Activated naive CD4-positive, alpha-beta T cell treated with anti-CD3 and anti-CD28 coated beads for 36 hours (primary cell): ENCODE measurements at regions of chr2 and their contacts with region 1.

Region 1: DNA sequence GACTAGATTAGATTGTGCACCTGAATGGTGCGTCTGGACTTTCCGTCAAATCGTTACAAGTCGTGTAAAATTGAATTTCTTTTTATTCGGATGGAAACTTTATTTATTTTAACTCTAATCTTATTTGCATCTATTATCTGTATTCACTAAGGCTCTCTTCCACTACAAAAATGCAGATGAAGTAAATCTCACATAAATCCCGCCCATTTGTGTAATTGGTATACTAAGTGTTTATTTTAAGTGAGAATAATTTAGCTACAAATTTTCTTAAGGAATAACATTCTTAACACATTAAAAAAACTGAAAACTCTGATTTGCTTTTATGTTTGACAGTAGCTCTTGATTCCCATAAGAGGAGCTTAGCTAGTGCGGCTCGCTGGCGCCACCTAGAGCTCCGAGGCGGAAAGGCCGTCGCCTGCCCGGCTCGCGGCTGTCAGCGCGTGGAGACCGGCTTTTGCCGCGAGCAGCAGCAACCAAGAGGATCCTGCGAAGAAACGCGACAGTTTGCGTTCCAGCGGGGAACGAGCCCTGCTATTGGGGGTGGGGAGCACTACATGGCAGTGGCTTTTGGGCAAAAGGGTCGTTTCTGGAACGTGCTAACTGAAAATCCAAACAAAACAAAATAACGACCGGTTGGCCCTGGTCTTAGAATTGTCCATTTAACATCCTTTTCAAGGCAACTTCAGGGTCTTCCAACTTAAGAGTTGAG is 6.7 kb downstream of the SP9 start:
- DNase-seq: peak; percentile 93
- H3K4me3 Mint-ChIP-seq: peak overlapping the region; percentile 62
- H3K27ac Mint-ChIP-seq: peak overlapping the region; percentile 51
- H3K4me1 Mint-ChIP-seq: peaks cover 37% of the 10 kb centered on the region
- H3K27me3 Mint-ChIP-seq: peaks cover 62% of the 10 kb centered on the region

Region 2: DNA sequence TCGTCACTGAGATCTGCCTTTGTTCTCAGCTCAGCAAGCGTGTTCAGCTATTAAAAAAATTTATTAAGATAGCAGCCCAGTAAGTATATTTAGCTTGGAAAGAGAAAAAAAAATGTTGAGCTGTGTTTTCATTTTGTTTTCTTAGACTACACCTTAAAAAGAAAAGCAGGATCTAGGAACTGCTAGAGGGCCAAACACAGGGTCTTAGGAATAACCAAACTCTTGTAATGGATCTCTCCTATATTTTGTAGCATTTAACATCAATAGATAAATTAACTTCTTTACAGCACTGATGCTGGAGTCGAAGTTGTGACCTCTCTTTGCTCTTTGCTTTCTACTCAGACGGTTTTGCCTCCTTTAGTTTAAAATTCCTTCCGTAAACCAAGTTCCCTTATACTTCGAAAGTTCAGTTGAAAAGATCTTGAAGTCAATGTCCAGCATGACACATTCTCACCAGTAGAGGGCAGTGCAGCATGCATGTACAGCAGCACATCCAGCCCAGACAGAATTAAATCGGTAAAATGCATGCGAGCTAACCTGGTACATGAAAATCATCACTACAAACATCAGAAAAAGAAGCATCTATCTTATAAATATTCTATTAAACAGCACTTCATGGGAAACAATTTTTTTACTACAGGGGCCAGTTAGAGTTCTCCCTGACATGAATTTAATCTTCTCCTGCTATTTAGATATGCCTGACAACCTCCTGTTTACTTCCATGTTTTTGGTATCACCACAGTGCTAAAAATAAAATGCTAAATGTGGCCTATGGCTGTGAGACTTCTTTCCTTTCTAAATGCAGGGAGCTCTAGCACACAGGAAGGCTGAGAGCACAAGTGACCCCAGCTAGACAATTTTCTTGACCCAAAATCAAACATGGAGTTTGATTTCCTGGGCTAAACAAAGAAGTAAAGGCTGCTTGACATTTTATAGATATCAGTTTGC is 1314.0 kb before region 1 on chr2:
- CTCF ChIA-PET with region 1: interaction called, 5 read pairs
- intact Hi-C with region 1: loop called (anchors 1 kb)
- DNase-seq: peak; percentile 90
- H3K4me3 Mint-ChIP-seq: no peak overlapping the region
- H3K27ac Mint-ChIP-seq: no peak overlapping the region
- H3K4me1 Mint-ChIP-seq: no peaks in the 10 kb centered on the region
- H3K27me3 Mint-ChIP-seq: peaks cover 3% of the 10 kb centered on the region

Region 3: DNA sequence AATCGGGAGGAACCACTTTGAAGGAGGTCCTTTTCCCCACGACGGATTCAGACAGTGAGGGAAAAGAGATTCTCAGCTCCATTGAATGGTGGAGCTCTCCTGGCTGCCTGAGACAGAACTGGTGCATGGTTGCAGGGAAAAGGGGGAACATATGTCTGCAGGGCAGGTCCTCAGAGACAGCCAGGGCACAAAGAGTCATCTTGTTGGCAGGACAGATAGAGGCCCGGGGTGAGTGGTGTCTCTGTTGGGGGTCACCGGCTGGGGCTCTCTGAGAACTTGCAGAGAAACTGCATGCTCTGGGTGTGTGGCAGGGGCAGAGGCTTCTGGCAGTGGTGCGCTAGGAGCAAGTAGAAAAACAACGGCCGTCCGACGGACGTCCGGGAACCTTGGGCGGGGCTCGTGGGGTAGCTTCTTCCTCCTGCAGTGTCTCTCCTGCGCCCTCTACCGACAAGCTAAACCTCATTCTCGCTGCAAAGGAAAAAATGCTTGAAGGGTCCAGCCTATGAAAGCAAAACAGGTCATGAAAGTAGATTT is 892.4 kb before region 1 on chr2:
- CTCF ChIA-PET with region 1: no interaction called
- intact Hi-C with region 1: loop called (anchors 1 kb)
- DNase-seq: peak; percentile 82
- H3K4me3 Mint-ChIP-seq: peak overlapping the region; percentile 64
- H3K27ac Mint-ChIP-seq: peak overlapping the region; percentile 39
- H3K4me1 Mint-ChIP-seq: peaks cover 11% of the 10 kb centered on the region
- H3K27me3 Mint-ChIP-seq: peaks cover 4% of the 10 kb centered on the region

Region 4: GRCh38 chr2:173884025-173884802 is 457.2 kb before region 1 on chr2:
- CTCF ChIA-PET with region 1: interaction called, 4 read pairs
- intact Hi-C with region 1: loop called (anchors 2 kb)
- DNase-seq: peak; percentile 38
- H3K4me3 Mint-ChIP-seq: no peak overlapping the region
- H3K27ac Mint-ChIP-seq: no peak overlapping the region
- H3K4me1 Mint-ChIP-seq: no peaks in the 10 kb centered on the region
- H3K27me3 Mint-ChIP-seq: peaks cover 5% of the 10 kb centered on the region

Region 5: DNA sequence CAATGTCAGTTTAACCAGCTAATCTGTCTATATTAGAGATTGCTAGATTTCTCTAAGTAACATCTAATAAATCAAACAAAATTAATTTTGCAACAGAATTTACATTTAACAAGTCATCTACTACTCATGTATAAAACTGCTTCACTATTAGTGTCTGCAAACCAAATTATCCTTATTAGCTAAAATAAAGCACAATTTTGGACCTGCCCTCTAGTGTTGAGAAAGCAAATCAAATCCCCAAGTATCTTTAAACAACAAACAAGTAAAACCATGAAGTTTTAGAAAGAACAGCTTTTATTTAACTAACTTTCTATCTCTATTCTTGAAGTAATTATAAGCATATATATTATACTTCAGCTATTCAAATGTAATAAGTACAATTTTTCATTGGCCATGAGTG is 263.2 kb before region 1 on chr2:
- CTCF ChIA-PET with region 1: interaction called, 3 read pairs
- intact Hi-C with region 1: loop called (anchors 10 kb)
- DNase-seq: no peak
- H3K4me3 Mint-ChIP-seq: no peak overlapping the region
- H3K27ac Mint-ChIP-seq: no peak overlapping the region
- H3K4me1 Mint-ChIP-seq: no peaks in the 10 kb centered on the region
- H3K27me3 Mint-ChIP-seq: no peaks in the 10 kb centered on the region

Region 6: DNA sequence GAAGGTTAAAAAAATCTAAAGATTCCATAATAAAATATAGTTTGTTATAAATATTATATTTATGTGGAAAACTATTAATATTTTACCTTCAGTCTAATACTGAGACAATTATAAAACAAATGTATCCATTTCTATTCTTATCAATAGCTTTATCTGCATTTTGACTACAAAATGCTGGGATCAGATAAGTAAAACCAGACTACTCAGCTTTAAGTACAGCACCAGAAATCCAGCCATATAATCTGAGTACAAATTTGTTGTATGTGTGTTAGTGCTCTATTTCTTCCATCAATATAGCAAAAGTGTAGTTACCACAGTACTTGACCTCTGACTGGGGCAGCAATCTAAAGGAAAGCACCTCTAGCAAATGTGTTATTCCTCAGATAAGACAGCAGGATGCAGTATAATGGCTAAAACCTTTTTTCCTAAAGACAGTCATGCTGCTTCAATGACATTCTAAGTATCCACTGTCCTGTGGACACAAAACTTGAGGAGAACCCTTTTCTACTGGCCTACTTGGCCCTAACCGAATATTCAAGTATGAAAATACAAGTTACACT is 161.2 kb before region 1 on chr2:
- CTCF ChIA-PET with region 1: no interaction called
- intact Hi-C with region 1: no loop called
- DNase-seq: no peak
- H3K4me3 Mint-ChIP-seq: no peak overlapping the region
- H3K27ac Mint-ChIP-seq: no peak overlapping the region
- H3K4me1 Mint-ChIP-seq: no peaks in the 10 kb centered on the region
- H3K27me3 Mint-ChIP-seq: no peaks in the 10 kb centered on the region

Region 7: GRCh38 chr2:174326161-174327020 is 15.0 kb before region 1 on chr2:
- CTCF ChIA-PET with region 1: interaction called, 22 read pairs
- intact Hi-C with region 1: loop called (anchors 1 kb)
- DNase-seq: peak; percentile 39
- H3K4me3 Mint-ChIP-seq: peak overlapping the region; percentile 70
- H3K27ac Mint-ChIP-seq: no peak overlapping the region
- H3K4me1 Mint-ChIP-seq: peaks cover 25% of the 10 kb centered on the region
- H3K27me3 Mint-ChIP-seq: peaks cover 74% of the 10 kb centered on the region

Region 8: DNA sequence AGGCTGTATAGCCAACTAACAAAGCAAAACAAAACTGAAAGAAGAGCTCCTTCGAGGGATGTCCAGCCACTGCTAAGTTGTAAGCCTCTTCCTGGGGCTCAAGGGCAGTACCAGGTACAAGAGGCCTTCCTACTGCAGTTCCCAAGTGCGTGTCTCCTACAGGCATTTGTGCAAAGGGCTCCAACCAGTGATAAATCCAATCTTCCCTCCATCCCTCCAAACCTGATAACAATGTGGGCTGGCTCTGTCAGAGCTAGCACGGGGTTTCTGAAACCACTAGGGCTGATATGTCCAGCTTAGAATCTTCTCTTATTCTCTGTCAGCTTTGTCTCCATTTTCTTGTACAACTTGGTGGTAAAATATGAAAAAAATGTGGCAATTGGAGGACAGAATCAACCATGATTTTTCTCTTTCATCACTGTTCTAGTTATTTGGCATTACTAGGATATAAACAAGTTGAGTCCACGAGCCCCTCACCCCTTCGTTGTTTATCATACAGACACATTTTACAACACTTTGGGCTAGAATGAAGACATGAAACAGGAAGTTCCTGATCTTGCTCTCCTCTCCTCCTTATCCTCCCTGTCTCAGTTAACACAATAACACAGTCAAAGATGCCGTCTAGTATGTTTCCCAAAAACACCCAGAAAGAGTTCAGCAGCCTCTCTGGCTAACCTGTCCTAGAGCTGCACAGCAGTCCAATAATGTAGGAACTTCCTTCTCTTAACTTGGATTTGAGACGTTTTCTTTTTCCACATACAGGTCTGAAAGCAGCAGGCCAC is 291.6 kb after region 1 on chr2:
- CTCF ChIA-PET with region 1: no interaction called
- intact Hi-C with region 1: no loop called
- DNase-seq: no peak
- H3K4me3 Mint-ChIP-seq: peak overlapping the region; percentile 91
- H3K27ac Mint-ChIP-seq: peak overlapping the region; percentile 99
- H3K4me1 Mint-ChIP-seq: peaks cover 60% of the 10 kb centered on the region
- H3K27me3 Mint-ChIP-seq: no peaks in the 10 kb centered on the region